B cell (primary cell): ENCODE measurements at regions of chr9 and their contacts with region 1.

Region 1: GRCh38 chr9:5582835-5583195 is 46.1 kb upstream of the RIC1 start:
- DNase-seq: peak; percentile 85
- ATAC-seq: peak; percentile 76
- H3K4me3 ChIP-seq: no peak overlapping the region
- H3K4me3 Mint-ChIP-seq: peak overlapping the region; percentile 67
- H3K27ac ChIP-seq: peak overlapping the region; percentile 53 to 75
- H3K27ac Mint-ChIP-seq: peak overlapping the region; percentile 92
- H3K4me1 ChIP-seq: peaks cover 25% of the 10 kb centered on the region in 2 donors
- H3K4me1 Mint-ChIP-seq: peaks cover 60% of the 10 kb centered on the region
- H3K27me3 ChIP-seq: no peaks in the 10 kb centered on the region
- H3K27me3 Mint-ChIP-seq: no peaks in the 10 kb centered on the region
- CTCF ChIP-seq: no peak

Region 2: DNA sequence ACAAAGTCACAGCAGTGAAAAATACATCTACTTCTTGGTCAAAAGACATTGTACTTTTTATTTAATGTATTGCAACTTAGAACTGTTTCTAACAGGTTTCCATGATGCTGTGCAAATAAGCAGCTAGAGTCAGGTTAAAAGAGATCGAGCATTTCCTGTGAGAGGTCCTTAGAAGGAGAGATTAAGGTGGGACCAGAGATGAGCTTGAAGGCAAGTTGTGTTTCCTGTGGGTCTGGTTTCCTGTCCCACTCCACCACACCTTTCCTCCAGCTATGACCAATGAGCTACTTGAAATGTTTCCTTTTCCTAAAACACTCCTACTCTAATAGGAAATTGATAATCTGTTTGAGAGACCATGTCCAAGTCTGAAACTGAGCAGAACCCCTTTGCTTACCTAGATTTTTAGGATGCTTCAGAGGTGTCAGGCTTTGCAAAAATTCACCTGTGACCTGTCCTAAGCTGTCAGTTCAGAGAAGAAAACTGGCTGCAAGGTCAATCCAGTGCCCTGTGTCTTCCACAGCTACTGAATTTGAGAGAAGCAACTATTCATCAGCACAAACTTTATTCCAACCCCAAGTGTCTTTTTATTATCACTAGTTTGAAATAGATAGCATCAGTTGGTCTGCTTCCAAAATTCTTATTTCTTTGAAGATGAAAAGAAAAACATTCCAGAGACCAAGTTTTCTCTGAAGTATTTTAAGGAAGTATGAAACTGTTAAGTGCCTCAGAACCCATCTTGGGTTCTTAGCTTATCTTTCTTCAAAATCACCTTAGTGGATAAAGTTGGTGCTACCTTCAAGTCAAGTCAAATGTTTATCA is 230.0 kb before region 1 on chr9:
- CTCF ChIA-PET with region 1: no interaction called
- POLR2A ChIA-PET with region 1: no interaction called
- intact Hi-C with region 1: loop called (anchors 10 kb)
- DNase-seq: no peak
- ATAC-seq: no peak
- H3K4me3 ChIP-seq: no peak overlapping the region
- H3K4me3 Mint-ChIP-seq: no peak overlapping the region
- H3K27ac ChIP-seq: no peak overlapping the region
- H3K27ac Mint-ChIP-seq: no peak overlapping the region
- H3K4me1 ChIP-seq: no peaks in the 10 kb centered on the region
- H3K4me1 Mint-ChIP-seq: peaks cover 7% of the 10 kb centered on the region
- H3K27me3 ChIP-seq: no peaks in the 10 kb centered on the region
- H3K27me3 Mint-ChIP-seq: no peaks in the 10 kb centered on the region
- CTCF ChIP-seq: no peak

Region 3: DNA sequence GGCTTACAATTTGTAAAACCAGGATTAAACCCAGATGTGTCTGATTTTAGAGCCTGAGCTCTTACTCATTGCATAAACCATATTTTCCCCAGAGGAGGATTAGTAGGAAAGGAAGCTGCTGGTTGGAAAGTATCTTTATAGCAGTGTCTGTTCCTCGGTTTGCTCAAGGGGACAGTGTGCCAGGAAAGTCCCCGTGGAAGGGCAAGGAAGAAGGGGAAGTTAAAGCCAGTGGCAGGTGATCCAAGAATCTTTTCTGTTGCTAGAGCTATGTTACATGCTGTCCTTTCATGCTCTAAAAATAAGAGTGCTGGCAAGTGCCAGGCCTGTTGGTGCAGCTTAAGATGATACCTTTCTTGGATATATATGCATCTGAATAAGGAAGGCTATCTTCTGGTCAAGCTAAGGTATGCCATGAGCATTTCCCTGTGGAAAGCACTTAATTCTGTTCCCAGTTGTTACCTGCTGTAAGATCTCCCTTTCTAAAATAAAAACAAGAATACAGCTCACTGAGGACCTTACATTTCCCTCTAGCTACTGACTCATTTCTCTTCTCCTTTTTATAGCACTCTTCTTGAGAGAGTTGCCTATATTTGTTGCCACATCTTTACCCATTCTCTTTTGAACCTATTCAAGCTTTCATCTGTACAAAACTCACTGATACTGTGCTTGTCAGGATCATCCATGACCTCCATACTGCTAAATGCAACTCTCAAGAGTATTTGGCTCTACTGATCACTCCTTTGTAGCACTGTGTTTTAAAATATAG is 64.5 kb before region 1 on chr9:
- CTCF ChIA-PET with region 1: no interaction called
- POLR2A ChIA-PET with region 1: no interaction called
- intact Hi-C with region 1: no loop called
- DNase-seq: no peak
- ATAC-seq: no peak
- H3K4me3 ChIP-seq: no peak overlapping the region
- H3K4me3 Mint-ChIP-seq: no peak overlapping the region
- H3K27ac ChIP-seq: no peak overlapping the region
- H3K27ac Mint-ChIP-seq: no peak overlapping the region
- H3K4me1 ChIP-seq: peaks cover 4 to 10% of the 10 kb centered on the region in 2 donors
- H3K4me1 Mint-ChIP-seq: peaks cover 27% of the 10 kb centered on the region
- H3K27me3 ChIP-seq: peaks cover 0 to 7% (median 0%) of the 10 kb centered on the region in 4 experiments
- H3K27me3 Mint-ChIP-seq: no peaks in the 10 kb centered on the region
- CTCF ChIP-seq: no peak

Region 4: DNA sequence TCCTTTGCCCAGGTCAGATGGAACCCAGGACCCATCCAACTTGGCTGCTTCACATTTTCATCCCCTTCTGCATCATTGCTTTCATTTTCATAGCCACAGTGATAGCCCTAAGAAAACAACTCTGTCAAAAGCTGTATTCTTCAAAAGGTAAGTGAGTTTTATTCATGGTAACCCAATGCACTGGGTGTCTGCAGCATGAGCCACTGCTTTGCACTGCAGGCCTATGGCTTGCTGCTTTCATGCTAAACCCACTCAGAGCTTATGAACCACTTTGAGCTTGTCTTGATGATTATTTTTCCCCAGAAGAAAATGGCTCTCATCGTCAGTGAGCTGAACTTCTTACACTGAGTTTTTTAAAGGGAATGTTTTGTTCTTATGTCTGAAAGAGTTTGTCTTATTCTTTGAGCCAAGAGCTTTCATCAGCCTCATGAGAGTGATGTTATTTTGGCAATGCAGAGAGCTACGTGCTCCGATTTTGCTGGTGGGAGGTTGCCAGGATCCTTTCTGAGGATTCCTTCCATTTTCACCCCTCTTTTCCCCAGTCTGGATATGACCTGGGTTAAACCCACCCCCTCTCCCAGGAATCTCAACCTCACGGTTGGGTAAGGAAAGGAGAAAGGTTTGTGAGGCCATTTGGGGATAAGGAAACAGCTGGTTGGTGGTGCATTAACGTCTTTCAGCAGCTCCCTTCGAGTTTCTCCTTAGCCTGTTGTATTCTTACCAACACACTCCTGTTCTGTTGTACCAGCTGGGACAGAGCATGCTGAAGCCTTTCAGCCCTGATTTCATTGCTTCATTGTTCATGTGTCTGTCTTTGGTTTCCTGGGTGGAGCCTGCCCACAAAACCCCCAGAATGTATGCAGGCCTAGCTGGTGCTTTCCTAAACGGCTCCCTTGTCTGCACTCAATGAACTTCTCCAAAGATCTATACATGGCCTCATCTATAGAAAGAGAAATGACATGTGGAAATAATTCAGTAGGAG is 24.9 kb before region 1 on chr9:
- CTCF ChIA-PET with region 1: interaction called, 15 read pairs
- POLR2A ChIA-PET with region 1: interaction called, 3 read pairs
- intact Hi-C with region 1: no loop called
- DNase-seq: peak; percentile 71
- ATAC-seq: peak; percentile 73
- H3K4me3 ChIP-seq: peak overlapping the region in 1 of 5 experiments; percentile 22
- H3K4me3 Mint-ChIP-seq: peak overlapping the region; percentile 53
- H3K27ac ChIP-seq: peak overlapping the region in 1 of 2 donors; percentile 7
- H3K27ac Mint-ChIP-seq: peak overlapping the region; percentile 53
- H3K4me1 ChIP-seq: peaks cover 25 to 34% of the 10 kb centered on the region in 2 donors
- H3K4me1 Mint-ChIP-seq: peaks cover 40% of the 10 kb centered on the region
- H3K27me3 ChIP-seq: no peaks in the 10 kb centered on the region
- H3K27me3 Mint-ChIP-seq: no peaks in the 10 kb centered on the region
- CTCF ChIP-seq: no peak

Region 5: DNA sequence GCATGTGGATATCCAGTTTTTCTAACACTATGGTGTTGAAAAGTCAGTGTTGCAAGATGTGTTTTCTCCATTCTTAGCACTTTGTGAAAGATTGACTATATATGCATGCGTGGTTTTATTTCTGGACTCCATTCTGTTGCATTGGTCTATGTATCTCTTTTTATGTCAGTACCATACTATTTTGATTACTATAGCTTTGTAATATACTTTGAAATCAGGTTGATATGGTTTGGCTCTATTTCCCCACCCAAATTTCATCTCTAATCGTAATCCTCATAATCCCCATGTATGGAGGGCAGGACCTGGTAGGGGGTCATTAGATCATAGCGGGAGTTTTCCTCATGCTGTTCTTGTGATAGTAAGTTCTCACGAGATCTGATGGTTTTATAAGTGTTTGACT is 52.6 kb after region 1 on chr9:
- CTCF ChIA-PET with region 1: no interaction called
- POLR2A ChIA-PET with region 1: no interaction called
- intact Hi-C with region 1: no loop called
- DNase-seq: no peak
- ATAC-seq: no peak
- H3K4me3 ChIP-seq: no peak overlapping the region
- H3K4me3 Mint-ChIP-seq: no peak overlapping the region
- H3K27ac ChIP-seq: no peak overlapping the region
- H3K27ac Mint-ChIP-seq: no peak overlapping the region
- H3K4me1 ChIP-seq: peaks cover 8 to 16% of the 10 kb centered on the region in 2 donors
- H3K4me1 Mint-ChIP-seq: peaks cover 53% of the 10 kb centered on the region
- H3K27me3 ChIP-seq: no peaks in the 10 kb centered on the region
- H3K27me3 Mint-ChIP-seq: no peaks in the 10 kb centered on the region
- CTCF ChIP-seq: no peak